ENCODE measurements at regions of chrX and their contacts with region 1.

Region 1: DNA sequence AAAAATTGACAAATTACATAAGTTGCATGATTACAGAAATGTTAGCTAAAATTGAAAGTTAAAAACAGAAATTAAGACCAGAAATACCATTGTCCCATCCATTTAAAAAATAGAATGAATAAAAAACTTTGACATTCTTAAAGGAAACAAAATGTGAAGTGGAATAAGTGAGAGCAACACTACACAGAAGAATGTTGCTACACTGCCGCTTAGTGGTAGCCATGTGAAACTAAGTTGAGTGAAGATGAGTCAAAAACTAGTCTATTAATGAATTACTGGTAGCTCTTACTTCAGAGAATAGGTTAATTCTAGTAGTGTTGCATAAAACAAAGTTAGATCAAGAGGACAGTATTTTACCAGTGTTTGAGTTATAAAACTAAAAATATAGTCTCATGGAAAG is 571.0 kb upstream of the KLHL4 start:
- DNase-seq: peak; percentile 5
- ATAC-seq: no peak
- H3K4me3 Mint-ChIP-seq: no peak overlapping the region
- H3K27ac Mint-ChIP-seq: no peak overlapping the region
- H3K4me1 Mint-ChIP-seq: no peaks in the 10 kb centered on the region
- H3K27me3 Mint-ChIP-seq: no peaks in the 10 kb centered on the region

Region 2: GRCh38 chrX:85611926-85612325 is 1334.6 kb before region 1 on chrX:
- CTCF ChIA-PET with region 1: no interaction called
- POLR2A ChIA-PET with region 1: no interaction called
- intact Hi-C with region 1: loop called in 1 of 2 experiments (anchors 5 kb)
- DNase-seq: no peak
- ATAC-seq: no peak
- H3K4me3 Mint-ChIP-seq: no peak overlapping the region
- H3K27ac Mint-ChIP-seq: no peak overlapping the region
- H3K4me1 Mint-ChIP-seq: no peaks in the 10 kb centered on the region
- H3K27me3 Mint-ChIP-seq: no peaks in the 10 kb centered on the region

Region 3: GRCh38 chrX:86964321-86964720 is 17.8 kb after region 1 on chrX:
- CTCF ChIA-PET with region 1: no interaction called
- POLR2A ChIA-PET with region 1: no interaction called
- intact Hi-C with region 1: no loop called
- DNase-seq: no peak
- ATAC-seq: no peak
- H3K4me3 Mint-ChIP-seq: no peak overlapping the region
- H3K27ac Mint-ChIP-seq: no peak overlapping the region
- H3K4me1 Mint-ChIP-seq: no peaks in the 10 kb centered on the region
- H3K27me3 Mint-ChIP-seq: no peaks in the 10 kb centered on the region

Measured in activated CD4-positive, alpha-beta T cell treated with anti-CD3 and anti-CD28 coated beads for 36 hours (primary cell).